ENCODE measurements at regions of chr12 and their contacts with region 1.

Region 1: GRCh38 chr12:108691175-108691997 is 39.9 kb downstream of the CORO1C start:
- DNase-seq: peak; percentile 96
- ATAC-seq: peak; percentile 89

Region 2: GRCh38 chr12:108305520-108305919 is 385.9 kb before region 1 on chr12:
- intact Hi-C with region 1: no loop called
- DNase-seq: peak; percentile 95
- ATAC-seq: peak; percentile 85

Region 3: GRCh38 chr12:108729612-108730364 is 38.4 kb after region 1 on chr12:
- intact Hi-C with region 1: loop called (anchors 5 kb)
- DNase-seq: no peak
- ATAC-seq: no peak